IMR-90 (cell line): ENCODE measurements at regions of chr9 and their contacts with region 1.

Region 1: DNA sequence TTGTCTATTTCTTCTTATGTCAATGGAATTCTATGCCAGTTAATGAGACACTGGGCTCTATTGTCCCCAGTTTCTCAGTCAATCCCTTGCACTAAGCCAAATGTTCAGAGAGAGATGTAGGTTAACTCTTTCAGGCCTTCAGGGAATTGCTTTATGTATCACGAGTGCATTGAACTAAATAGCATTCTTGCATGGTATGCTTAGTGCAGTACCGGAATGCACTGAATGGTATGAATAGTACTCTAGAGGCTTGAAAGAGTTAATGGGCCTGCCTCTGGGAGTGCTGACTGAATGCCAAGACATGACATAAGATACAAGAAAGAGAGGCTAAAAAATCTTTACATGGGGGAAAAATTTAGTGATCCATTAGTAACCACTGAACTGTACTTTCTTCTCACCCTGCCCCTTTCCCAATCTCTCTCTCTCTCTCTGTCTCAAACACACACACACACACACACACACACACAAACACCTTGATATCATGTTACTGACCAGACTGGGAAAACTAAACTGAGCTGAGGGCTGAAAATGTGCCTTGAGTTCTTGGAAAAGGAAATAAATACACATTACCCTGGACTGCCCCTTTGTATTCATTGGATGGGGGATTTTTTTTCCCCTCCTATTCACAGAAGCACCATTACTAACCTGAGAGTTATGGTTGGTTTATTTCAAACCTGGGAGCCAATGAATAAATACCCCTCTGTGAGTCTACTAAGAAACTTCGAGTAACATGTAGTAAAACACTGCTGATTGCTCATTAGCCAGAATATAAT is 35.4 kb upstream of the TMC1 start:
- DNase-seq: peak; percentile 68
- ATAC-seq: peak; percentile 69
- H3K4me3 ChIP-seq: no peak overlapping the region
- H3K27ac ChIP-seq: no peak overlapping the region
- H3K4me1 ChIP-seq: peaks cover 8% of the 10 kb centered on the region
- H3K27me3 ChIP-seq: no peaks in the 10 kb centered on the region
- CTCF ChIP-seq: no peak
- POLR2A ChIP-seq: no peak
- RAD21 ChIP-seq: no peak

Region 2: DNA sequence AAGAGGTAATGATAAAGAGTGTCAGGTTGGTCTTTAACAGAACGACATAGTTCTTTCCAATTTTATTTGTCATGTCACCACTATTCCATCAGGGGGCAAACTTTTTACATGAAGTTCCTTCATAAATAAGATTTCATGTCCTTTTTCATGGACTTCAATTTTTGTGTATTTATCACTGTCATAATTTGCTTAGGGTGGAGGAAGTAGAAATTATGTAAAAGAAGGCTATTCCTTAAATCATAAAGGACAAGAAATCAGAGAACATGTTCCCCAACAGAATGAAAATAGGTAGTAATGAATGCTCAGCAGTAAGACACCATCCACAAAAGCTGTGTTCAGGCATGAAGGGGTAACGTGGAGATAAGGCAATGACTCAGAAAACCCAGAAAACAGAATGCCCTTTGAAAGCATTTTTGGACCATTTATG is 193.7 kb before region 1 on chr9:
- CTCF ChIA-PET with region 1: no interaction called
- POLR2A ChIA-PET with region 1: no interaction called
- dilution Hi-C with region 1: no loop called
- in situ Hi-C with region 1: no loop called
- intact Hi-C with region 1: no loop called
- DNase-seq: peak; percentile 49
- ATAC-seq: peak; percentile 78
- H3K4me3 ChIP-seq: no peak overlapping the region
- H3K27ac ChIP-seq: no peak overlapping the region
- H3K4me1 ChIP-seq: peaks cover 2% of the 10 kb centered on the region; the same call in 1 of the 2 replicates
- H3K27me3 ChIP-seq: 0 out of 2 replicates have a peak, but pooled peaks cover 4% of the 10 kb centered on the region
- CTCF ChIP-seq: peak; percentile 68
- POLR2A ChIP-seq: no peak
- RAD21 ChIP-seq: peak; percentile 65

Region 3: GRCh38 chr9:72305102-72305546 is 180.9 kb before region 1 on chr9:
- CTCF ChIA-PET with region 1: no interaction called
- POLR2A ChIA-PET with region 1: no interaction called
- dilution Hi-C with region 1: no loop called
- in situ Hi-C with region 1: no loop called
- intact Hi-C with region 1: loop called (anchors 10 kb)
- DNase-seq: peak; percentile 92
- ATAC-seq: peak; percentile 99
- H3K4me3 ChIP-seq: peak overlapping the region; percentile 35; the same call in 1 of the 2 replicates
- H3K27ac ChIP-seq: peak overlapping the region; percentile 41; the same call in 1 of the 2 replicates
- H3K4me1 ChIP-seq: no peaks in the 10 kb centered on the region
- H3K27me3 ChIP-seq: no peaks in the 10 kb centered on the region
- CTCF ChIP-seq: no peak
- POLR2A ChIP-seq: no peak
- RAD21 ChIP-seq: no peak

Region 4: GRCh38 chr9:72551306-72552090 is 65.5 kb after region 1 on chr9:
- CTCF ChIA-PET with region 1: no interaction called
- POLR2A ChIA-PET with region 1: interaction called, 12 read pairs
- dilution Hi-C with region 1: no loop called
- in situ Hi-C with region 1: no loop called
- intact Hi-C with region 1: no loop called
- DNase-seq: no peak
- ATAC-seq: no peak
- H3K4me3 ChIP-seq: no peak overlapping the region
- H3K27ac ChIP-seq: no peak overlapping the region
- H3K4me1 ChIP-seq: peaks cover 5% of the 10 kb centered on the region
- H3K27me3 ChIP-seq: no peaks in the 10 kb centered on the region
- CTCF ChIP-seq: no peak
- POLR2A ChIP-seq: no peak
- RAD21 ChIP-seq: no peak